HepG2 (cell line): ENCODE measurements at regions of chr11 and their contacts with region 1.

Region 1: GRCh38 chr11:134275534-134276395 is at the start of gene GLB1L3:
- DNase-seq: no peak
- ATAC-seq: peak; percentile 59
- H3K4me3 ChIP-seq: peak within 1 kb of the TSS in 2 of 3 experiments; percentile 13 to 19; a peak in 1 of 6 replicates
- H3K27ac ChIP-seq: no peak within 1 kb of the TSS
- H3K4me1 ChIP-seq: peaks cover 20% of the 10 kb centered on the region
- H3K27me3 ChIP-seq: peaks cover 6 to 63% of the 10 kb centered on the region in 2 experiments
- CTCF ChIP-seq: no peak
- EP300 ChIP-seq: no peak
- POLR2A ChIP-seq: no peak
- RAD21 ChIP-seq: no peak
- total RNA-seq, gene GLB1L3: not detected in 2 replicates

Region 2: DNA sequence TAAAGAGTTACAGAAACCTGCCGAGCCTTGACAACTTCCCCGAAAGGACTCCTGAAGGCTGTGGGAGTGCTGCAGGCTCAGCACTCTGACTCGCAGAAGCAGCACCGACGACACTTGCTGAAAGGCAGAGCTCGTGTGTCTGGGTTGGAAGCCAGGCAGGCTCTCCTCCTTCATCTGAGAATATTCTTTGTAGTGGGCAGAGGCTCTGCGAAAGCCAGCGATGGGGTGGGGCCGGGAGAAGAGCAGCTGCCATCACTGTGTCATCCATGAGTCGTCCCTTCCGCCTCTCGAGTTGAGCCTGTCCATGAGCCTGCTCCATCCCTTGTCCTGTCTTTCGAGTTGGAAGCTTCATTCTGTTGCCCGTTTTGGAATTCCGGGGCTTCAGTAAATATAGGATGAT is 67.9 kb after region 1 on chr11:
- CTCF ChIA-PET with region 1: no interaction called
- POLR2A ChIA-PET with region 1: no interaction called
- in situ Hi-C with region 1: no loop called
- intact Hi-C with region 1: loop called (anchors 2 kb)
- DNase-seq: no peak
- ATAC-seq: no peak
- H3K4me3 ChIP-seq: no peak overlapping the region
- H3K27ac ChIP-seq: no peak overlapping the region
- H3K4me1 ChIP-seq: no peaks in the 10 kb centered on the region
- H3K27me3 ChIP-seq: peaks cover 2 to 41% of the 10 kb centered on the region in 2 experiments; a peak in 3 of 5 replicates
- CTCF ChIP-seq: no peak
- EP300 ChIP-seq: no peak
- POLR2A ChIP-seq: no peak
- RAD21 ChIP-seq: no peak